Esophagus muscularis mucosa (tissue), 4 donors: ENCODE measurements at regions of chr4 and their contacts with region 1.

Region 1: GRCh38 chr4:163554870-163555465 is 60.5 kb downstream of the TMA16 start:
- DNase-seq: no peak
- H3K4me3 ChIP-seq: no peak overlapping the region
- H3K27ac ChIP-seq: no peak overlapping the region
- H3K4me1 ChIP-seq: peaks cover 6 to 17% (median 12%) of the 10 kb centered on the region in 4 donors
- H3K27me3 ChIP-seq: no peaks in the 10 kb centered on the region
- CTCF ChIP-seq: peak; percentile 40 to 66 (median 56)
- EP300 ChIP-seq: no peak
- POLR2A ChIP-seq: no peak

Region 2: GRCh38 chr4:163395758-163396157 is 159.2 kb before region 1 on chr4:
- intact Hi-C with region 1: no loop called
- DNase-seq: no peak
- H3K4me3 ChIP-seq: no peak overlapping the region
- H3K27ac ChIP-seq: no peak overlapping the region
- H3K4me1 ChIP-seq: no peaks in the 10 kb centered on the region
- H3K27me3 ChIP-seq: no peaks in the 10 kb centered on the region
- CTCF ChIP-seq: no peak
- EP300 ChIP-seq: no peak
- POLR2A ChIP-seq: no peak

Region 3: GRCh38 chr4:163494360-163495162 is 60.4 kb before region 1 on chr4 and contains the start of gene TMA16:
- intact Hi-C with region 1: no loop called
- DNase-seq: peak; percentile 94
- H3K4me3 ChIP-seq: peak within 1 kb of the TSS; percentile 63 to 83 (median 72)
- H3K27ac ChIP-seq: peak within 1 kb of the TSS; percentile 74 to 84 (median 82)
- H3K4me1 ChIP-seq: peaks cover 4 to 21% (median 15%) of the 10 kb centered on the region in 4 donors
- H3K27me3 ChIP-seq: no peaks in the 10 kb centered on the region
- CTCF ChIP-seq: peak in 1 of 3 experiments; percentile 10
- EP300 ChIP-seq: no peak
- POLR2A ChIP-seq: no peak
- total RNA-seq, gene TMA16: 11.2 to 21.9 (median 16.6) TPM

Region 4: DNA sequence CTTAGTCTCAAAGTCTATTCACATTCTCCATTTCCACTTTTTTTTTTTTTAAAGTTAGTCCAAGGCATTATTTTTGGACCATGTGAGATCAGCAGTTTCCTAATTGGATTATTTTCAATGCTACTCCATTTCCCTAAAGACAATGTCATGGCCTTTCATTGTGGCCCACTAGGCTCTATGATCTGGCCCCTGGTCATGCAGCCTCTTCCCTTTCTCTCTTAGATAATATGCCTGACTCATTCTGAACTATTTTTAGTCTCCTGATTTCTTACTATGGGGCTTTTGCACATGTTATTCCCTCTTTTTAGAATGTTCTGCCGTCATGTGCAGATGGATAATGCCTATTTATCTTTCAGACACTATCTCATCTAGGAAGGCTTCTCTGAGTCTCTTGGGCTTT is 96.8 kb after region 1 on chr4:
- intact Hi-C with region 1: no loop called
- DNase-seq: no peak
- H3K4me3 ChIP-seq: no peak overlapping the region
- H3K27ac ChIP-seq: no peak overlapping the region
- H3K4me1 ChIP-seq: no peaks in the 10 kb centered on the region
- H3K27me3 ChIP-seq: no peaks in the 10 kb centered on the region
- CTCF ChIP-seq: no peak
- EP300 ChIP-seq: no peak
- POLR2A ChIP-seq: no peak

Region 5: DNA sequence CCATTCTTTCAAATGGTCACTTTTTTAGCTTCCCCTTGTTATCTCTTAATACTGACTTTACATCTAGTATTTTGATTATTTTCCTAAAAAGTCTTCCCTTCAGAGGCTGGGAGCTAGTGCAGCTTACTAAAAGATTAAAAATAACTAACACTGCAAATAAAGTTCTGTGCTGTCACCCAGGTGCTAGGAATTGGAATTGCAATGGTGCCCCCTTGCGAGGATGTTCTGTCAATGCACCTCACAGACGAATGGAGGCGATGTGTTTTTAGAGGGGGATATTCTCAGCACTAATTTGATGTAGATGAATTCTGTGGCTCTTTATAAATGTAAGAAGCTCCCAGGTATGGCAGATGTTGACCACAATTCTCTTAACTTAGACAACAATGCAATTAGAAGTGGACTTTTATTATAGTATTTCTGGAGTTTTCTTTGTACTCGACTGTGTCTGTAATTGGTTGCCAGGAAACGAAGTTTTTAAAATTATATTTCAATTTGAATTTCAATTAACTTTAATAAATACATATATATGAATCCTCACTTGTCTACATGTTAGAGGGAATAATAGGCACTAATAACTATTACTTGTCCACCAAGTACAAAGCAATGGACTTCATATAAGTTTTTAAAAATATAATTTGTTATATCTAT is 1177.0 kb after region 1 on chr4:
- intact Hi-C with region 1: loop called (anchors 5 kb)
- DNase-seq: no peak
- H3K4me3 ChIP-seq: no peak overlapping the region
- H3K27ac ChIP-seq: no peak overlapping the region
- H3K4me1 ChIP-seq: no peaks in the 10 kb centered on the region
- H3K27me3 ChIP-seq: peaks cover 0 to 9% (median 0%) of the 10 kb centered on the region in 4 donors
- CTCF ChIP-seq: peak; percentile 62 to 81 (median 66)
- EP300 ChIP-seq: no peak
- POLR2A ChIP-seq: no peak